Heart right ventricle (tissue), 16 donors: ENCODE measurements at regions of chr15 and their contacts with region 1.

Region 1: DNA sequence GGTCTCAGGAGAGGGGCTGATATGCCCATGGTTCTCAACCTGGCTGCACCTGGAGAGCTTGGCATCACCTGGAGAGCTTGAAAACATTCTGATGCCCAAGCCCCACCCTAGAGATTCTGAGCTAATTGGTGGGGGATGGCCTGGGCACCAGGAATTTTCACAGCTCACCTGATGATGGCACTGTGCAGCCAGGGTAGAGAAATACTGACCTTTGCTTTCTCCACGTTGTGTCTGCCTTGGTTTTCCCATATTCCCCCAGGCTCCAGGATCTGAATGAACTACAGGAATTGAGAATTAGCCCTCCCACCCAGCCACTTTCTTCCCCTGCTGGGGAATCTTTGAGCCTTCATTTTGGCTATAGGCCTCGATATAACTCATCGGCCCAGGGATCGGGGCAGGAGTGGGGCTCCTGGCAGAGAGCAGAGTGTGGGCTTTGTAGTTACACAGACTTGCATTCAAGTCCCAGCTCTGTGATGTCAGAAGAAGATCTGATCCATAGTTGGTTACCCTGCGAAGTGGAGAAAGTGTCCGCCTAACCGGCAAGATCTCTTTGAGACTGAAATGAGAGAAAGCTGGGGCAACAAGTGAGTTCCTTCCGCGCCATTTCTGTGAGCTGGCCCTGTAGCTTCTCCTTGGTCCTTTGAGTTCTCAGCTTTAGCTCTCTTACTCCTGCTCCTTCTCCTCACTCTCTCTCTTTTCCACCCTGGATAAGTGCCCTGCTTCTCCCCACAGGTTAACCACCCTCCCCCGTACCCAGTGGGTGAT is 33.1 kb upstream of the UBE2Q2 start:
- DNase-seq: no peak
- ATAC-seq: peak in 5 of 8 donors; percentile 47 to 59 (median 51)
- H3K4me3 ChIP-seq: no peak overlapping the region
- H3K27ac ChIP-seq: no peak overlapping the region
- H3K4me1 ChIP-seq: no peaks in the 10 kb centered on the region
- H3K27me3 ChIP-seq: peaks cover 0 to 8% (median 0%) of the 10 kb centered on the region in 7 donors
- CTCF ChIP-seq: peak in 7 of 9 donors; percentile 32 to 55 (median 47)

Region 2: GRCh38 chr15:75921729-75922703 is 111.8 kb after region 1 on chr15:
- intact Hi-C with region 1: loop called in 2 of 10 experiments (anchors 5 to 10 kb)
- DNase-seq: peak in 1 of 2 donors; percentile 32
- ATAC-seq: peak; percentile 23 to 80 (median 68)
- H3K4me3 ChIP-seq: no peak overlapping the region
- H3K27ac ChIP-seq: no peak overlapping the region
- H3K4me1 ChIP-seq: peaks cover 0 to 34% (median 25%) of the 10 kb centered on the region in 9 donors
- H3K27me3 ChIP-seq: no peaks in the 10 kb centered on the region
- CTCF ChIP-seq: peak in 8 of 9 donors; percentile 16 to 63 (median 51)